Endothelial cell of umbilical vein (primary cell): ENCODE measurements at regions of chr20 and their contacts with region 1.

Region 1: GRCh38 chr20:10469599-10469998 is 34.5 kb downstream of the SLX4IP start:
- DNase-seq: peak; percentile 90
- H3K4me3 ChIP-seq: no peak overlapping the region
- H3K27ac ChIP-seq: peak overlapping the region; percentile 9
- H3K4me1 ChIP-seq: peaks cover 40% of the 10 kb centered on the region
- H3K27me3 ChIP-seq: no peaks in the 10 kb centered on the region
- CTCF ChIP-seq: peak; percentile 49 to 50
- POLR2A ChIP-seq: no peak

Region 2: GRCh38 chr20:10536531-10536930 is 66.9 kb after region 1 on chr20:
- CTCF ChIA-PET with region 1: interaction called, 40 read pairs
- POLR2A ChIA-PET with region 1: no interaction called
- dilution Hi-C with region 1: no loop called
- intact Hi-C with region 1: loop called (anchors 1 kb)
- DNase-seq: peak; percentile 41
- H3K4me3 ChIP-seq: no peak overlapping the region
- H3K27ac ChIP-seq: no peak overlapping the region
- H3K4me1 ChIP-seq: peaks cover 18% of the 10 kb centered on the region
- H3K27me3 ChIP-seq: no peaks in the 10 kb centered on the region
- CTCF ChIP-seq: peak; percentile 49 to 57
- POLR2A ChIP-seq: no peak

Region 3: GRCh38 chr20:10864076-10864918 is 394.7 kb after region 1 on chr20:
- CTCF ChIA-PET with region 1: no interaction called
- POLR2A ChIA-PET with region 1: no interaction called
- dilution Hi-C with region 1: no loop called
- intact Hi-C with region 1: loop called (anchors 5 kb)
- DNase-seq: peak; percentile 48
- H3K4me3 ChIP-seq: no peak overlapping the region
- H3K27ac ChIP-seq: peak overlapping the region; percentile 59
- H3K4me1 ChIP-seq: peaks cover 32% of the 10 kb centered on the region
- H3K27me3 ChIP-seq: no peaks in the 10 kb centered on the region
- CTCF ChIP-seq: no peak
- POLR2A ChIP-seq: no peak

Region 4: DNA sequence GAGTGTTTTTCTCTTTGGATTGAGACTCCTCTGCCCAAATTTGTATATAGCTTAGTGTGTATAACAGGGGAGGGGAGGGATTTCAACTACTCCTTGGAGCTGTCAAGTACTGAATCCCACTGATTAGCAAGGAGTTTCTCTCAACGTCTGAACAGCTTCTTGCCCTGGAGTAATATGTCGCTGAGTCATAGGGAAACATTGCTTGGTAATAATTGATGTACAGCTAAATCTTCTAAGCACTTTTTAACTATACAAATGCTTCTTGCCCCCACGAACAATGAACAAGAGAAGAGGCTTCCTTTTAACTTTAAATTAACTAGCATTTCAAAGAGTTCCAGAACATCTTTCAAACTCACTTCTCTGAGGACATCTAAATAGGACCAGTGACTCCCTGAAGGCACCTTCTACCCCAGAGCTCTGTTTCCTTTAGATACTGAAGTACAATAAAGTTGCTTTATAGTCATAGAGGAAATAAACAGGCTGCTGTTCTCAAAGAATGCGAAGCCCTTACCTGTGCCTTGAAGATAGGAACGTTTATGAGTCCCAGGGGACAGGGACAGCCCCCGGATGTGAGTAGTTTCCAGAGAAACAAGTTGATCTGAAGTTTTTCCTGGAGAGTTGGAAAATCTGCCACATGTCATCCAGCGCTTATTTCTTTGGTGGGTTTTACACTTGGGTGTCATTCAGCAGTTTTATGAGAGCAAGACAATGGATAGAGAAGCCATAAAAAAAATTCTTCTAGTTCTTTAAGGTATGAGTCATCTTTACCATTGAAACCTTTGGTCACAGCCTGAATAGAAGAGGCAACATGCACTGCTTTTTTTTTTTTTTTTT is 985.6 kb after region 1 on chr20:
- CTCF ChIA-PET with region 1: no interaction called
- POLR2A ChIA-PET with region 1: no interaction called
- dilution Hi-C with region 1: no loop called
- intact Hi-C with region 1: loop called (anchors 10 kb)
- DNase-seq: peak; percentile 93
- H3K4me3 ChIP-seq: peak overlapping the region in 1 of 3 experiments; percentile 27
- H3K27ac ChIP-seq: peak overlapping the region; percentile 93
- H3K4me1 ChIP-seq: peaks cover 38% of the 10 kb centered on the region
- H3K27me3 ChIP-seq: no peaks in the 10 kb centered on the region
- CTCF ChIP-seq: no peak
- POLR2A ChIP-seq: peak; percentile 10